Heart left ventricle (tissue), 16 donors: ENCODE measurements at regions of chr17 and their contacts with region 1.

Region 1: GRCh38 chr17:32840241-32840640 is 36.7 kb downstream of the MYO1D start:
- DNase-seq: no peak
- ATAC-seq: no peak
- H3K4me3 ChIP-seq: no peak overlapping the region
- H3K27ac ChIP-seq: no peak overlapping the region
- H3K4me1 ChIP-seq: peaks cover 0 to 12% (median 0%) of the 10 kb centered on the region in 12 donors
- H3K27me3 ChIP-seq: no peaks in the 10 kb centered on the region
- CTCF ChIP-seq: no peak
- POLR2A ChIP-seq: no peak

Region 2: DNA sequence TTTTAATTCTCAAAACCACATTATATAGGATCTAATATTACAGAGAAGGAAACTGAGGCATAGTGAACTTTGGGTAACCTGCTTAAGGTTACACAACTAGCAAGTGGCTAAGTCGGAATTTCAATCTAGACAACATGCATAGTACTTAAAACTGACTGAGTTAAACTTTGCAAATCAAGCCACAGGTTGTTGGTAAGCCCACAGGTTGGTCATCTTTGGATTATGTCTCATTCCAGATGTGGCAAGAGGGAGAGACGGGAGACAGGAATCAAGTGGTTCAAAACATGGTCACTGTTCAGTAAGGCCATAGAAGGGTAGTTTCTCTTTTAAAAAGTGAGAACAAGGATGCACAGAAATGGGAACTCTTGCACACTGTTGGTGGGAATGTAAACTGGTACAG is 20.5 kb before region 1 on chr17:
- intact Hi-C with region 1: loop called in 1 of 10 experiments (anchors 2 kb)
- DNase-seq: no peak
- ATAC-seq: no peak
- H3K4me3 ChIP-seq: no peak overlapping the region
- H3K27ac ChIP-seq: peak overlapping the region in 5 of 12 donors; percentile 29 to 62 (median 51)
- H3K4me1 ChIP-seq: peaks cover 0 to 27% (median 13%) of the 10 kb centered on the region in 12 donors
- H3K27me3 ChIP-seq: no peaks in the 10 kb centered on the region
- CTCF ChIP-seq: no peak
- POLR2A ChIP-seq: no peak